AG04449 (cell line): ENCODE measurements at regions of chr17 and their contacts with region 1.

Region 1: GRCh38 chr17:28357061-28357900 is at the start of gene POLDIP2:
- DNase-seq: peak; percentile 51
- H3K4me3 ChIP-seq: peak within 1 kb of the TSS; percentile 95
- CTCF ChIP-seq: no peak

Region 2: DNA sequence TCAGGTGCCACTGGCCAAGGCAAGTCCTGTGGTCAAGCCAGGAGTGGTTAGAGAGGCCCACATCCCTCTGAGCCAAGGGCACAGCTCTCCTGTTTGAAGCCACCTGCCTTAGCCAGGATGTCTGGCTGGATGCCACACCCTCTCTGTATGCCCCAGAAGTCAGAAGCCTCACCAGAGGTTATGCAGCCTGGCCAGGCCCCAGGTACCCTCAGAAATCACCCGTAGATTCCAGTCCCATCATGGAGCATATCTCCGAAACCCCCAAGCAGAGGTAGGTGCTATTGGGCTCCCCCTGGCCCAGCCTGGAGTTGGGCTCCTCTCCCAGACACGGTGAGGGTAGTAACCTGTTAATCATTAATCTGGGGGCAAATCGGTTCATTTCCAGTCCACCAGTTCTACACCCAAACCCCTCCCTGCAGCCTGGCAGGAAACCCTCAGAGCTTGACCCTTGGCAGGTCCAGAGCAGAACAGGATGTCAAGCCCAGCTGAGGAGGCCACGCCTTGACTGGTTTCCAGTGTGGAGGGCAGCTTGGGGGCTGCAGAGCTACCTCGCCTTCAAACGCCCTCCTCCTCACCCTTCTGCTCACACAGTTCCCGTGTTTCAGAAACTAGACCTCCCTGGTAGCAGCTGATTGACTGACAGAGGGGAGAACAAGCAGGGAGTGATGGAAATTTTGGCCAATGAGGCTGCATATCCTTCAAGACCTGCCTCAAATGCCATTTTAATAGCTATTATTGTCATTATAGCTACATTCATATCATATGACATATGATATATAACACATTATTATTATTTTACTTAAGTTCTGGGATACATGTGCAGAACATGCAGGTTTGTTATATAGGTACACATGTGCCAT is 98.7 kb before region 1 on chr17:
- CTCF ChIA-PET with region 1: no interaction called
- POLR2A ChIA-PET with region 1: no interaction called
- DNase-seq: no peak
- H3K4me3 ChIP-seq: no peak overlapping the region
- CTCF ChIP-seq: no peak

Region 3: GRCh38 chr17:28346746-28347246 is 10.5 kb before region 1 on chr17:
- CTCF ChIA-PET with region 1: interaction called, 20 read pairs
- POLR2A ChIA-PET with region 1: interaction called, 20 read pairs
- DNase-seq: no peak
- H3K4me3 ChIP-seq: no peak overlapping the region
- CTCF ChIP-seq: peak; percentile 20

Region 4: DNA sequence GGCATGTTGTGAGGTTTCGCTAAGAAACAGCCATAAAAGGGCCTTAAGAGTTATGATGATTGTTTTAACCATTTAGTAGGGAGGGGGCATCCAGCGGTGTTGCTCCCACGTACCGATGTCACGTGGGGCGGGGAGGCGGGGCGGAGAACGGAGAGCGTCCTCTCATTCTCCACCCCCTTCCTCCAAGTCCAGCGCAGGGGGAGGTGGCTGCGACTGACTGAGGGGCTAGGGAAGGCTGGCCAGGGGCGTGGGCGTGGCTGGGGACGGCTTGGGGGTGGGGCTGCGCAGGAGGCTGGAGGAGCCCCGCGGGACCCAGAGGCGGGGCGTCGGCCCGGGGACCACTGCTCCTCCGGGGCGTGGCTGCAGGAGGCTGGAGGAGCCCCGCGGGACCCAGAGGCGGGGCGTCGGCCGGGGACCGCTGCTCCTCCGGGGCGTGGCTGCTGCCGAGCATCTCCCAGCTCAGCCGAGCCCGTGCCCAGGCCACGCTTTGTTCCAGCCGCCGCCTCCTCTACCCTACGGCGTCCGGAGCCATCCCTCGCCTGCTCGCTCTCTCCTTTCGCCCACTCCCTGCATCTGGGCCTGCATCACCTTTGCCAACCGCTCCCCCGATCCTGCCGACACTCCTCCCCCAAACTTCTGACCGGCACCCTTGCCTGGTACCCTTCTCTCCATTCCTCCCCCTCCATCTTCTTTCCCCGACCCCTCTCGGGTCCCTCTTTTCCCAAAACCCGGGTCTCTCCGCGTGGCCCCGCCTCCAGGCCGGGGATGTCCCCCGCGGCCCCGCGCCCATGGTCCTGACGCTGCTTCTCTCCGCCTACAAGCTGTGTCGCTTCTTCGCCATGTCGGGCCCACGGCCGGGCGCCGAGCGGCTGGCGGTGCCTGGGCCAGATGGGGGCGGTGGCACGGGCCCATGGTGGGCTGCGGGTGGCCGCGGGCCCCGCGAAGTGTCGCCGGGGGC is 14.2 kb after region 1 on chr17 and contains the start of gene SARM1:
- CTCF ChIA-PET with region 1: interaction called, 4 read pairs
- POLR2A ChIA-PET with region 1: interaction called, 15 read pairs
- DNase-seq: no peak
- H3K4me3 ChIP-seq: peak within 1 kb of the TSS; percentile 65
- CTCF ChIP-seq: no peak

Region 5: GRCh38 chr17:28385406-28385805 is 28.1 kb after region 1 on chr17:
- CTCF ChIA-PET with region 1: no interaction called
- POLR2A ChIA-PET with region 1: no interaction called
- DNase-seq: no peak
- H3K4me3 ChIP-seq: no peak overlapping the region
- CTCF ChIP-seq: no peak